ENCODE measurements at regions of chr9 and their contacts with region 1.

Region 1: GRCh38 chr9:72557549-72557948 is 36.1 kb downstream of the TMC1 start:
- DNase-seq: peak; percentile 97
- H3K4me3 ChIP-seq: no peak overlapping the region
- H3K27ac ChIP-seq: peak overlapping the region; percentile 58
- H3K4me1 ChIP-seq: peaks cover 26% of the 10 kb centered on the region
- H3K27me3 ChIP-seq: no peaks in the 10 kb centered on the region
- CTCF ChIP-seq: no peak

Region 2: DNA sequence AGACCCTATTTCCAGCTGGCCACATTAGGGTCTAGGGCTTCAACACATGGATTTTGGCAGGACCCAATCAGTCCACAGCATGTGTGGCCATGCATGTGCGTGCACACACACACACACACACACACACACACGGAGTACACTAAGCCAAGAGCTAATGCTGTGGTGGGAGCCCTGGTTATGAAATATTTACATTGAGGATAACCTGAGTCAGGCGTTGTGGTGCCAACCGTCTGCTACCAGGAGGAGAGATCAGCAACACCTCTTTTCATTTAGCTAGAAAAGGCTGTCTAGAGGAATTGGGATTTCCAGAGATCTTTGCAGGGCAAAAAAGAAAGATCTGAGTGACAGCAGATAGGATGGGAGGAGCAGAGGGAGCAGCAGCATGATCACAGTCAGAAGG is 1577.6 kb before region 1 on chr9:
- CTCF ChIA-PET with region 1: no interaction called
- dilution Hi-C with region 1: no loop called
- in situ Hi-C with region 1: no loop called
- intact Hi-C with region 1: no loop called
- DNase-seq: no peak
- H3K4me3 ChIP-seq: no peak overlapping the region
- H3K27ac ChIP-seq: no peak overlapping the region
- H3K4me1 ChIP-seq: no peaks in the 10 kb centered on the region
- H3K27me3 ChIP-seq: no peaks in the 10 kb centered on the region
- CTCF ChIP-seq: no peak

Region 3: GRCh38 chr9:72383978-72384709 is 173.4 kb before region 1 on chr9:
- CTCF ChIA-PET with region 1: no interaction called
- dilution Hi-C with region 1: loop called (anchors 10 kb)
- in situ Hi-C with region 1: no loop called
- intact Hi-C with region 1: no loop called
- DNase-seq: peak; percentile 87
- H3K4me3 ChIP-seq: no peak overlapping the region
- H3K27ac ChIP-seq: peak overlapping the region; percentile 17
- H3K4me1 ChIP-seq: peaks cover 7% of the 10 kb centered on the region
- H3K27me3 ChIP-seq: no peaks in the 10 kb centered on the region
- CTCF ChIP-seq: no peak

Region 4: GRCh38 chr9:72540348-72540873 is 17.1 kb before region 1 on chr9:
- CTCF ChIA-PET with region 1: interaction called, 3 read pairs
- dilution Hi-C with region 1: no loop called
- in situ Hi-C with region 1: no loop called
- intact Hi-C with region 1: loop called (anchors 1 kb)
- DNase-seq: peak; percentile 96
- H3K4me3 ChIP-seq: no peak overlapping the region
- H3K27ac ChIP-seq: peak overlapping the region; percentile 95
- H3K4me1 ChIP-seq: peaks cover 34% of the 10 kb centered on the region
- H3K27me3 ChIP-seq: no peaks in the 10 kb centered on the region
- CTCF ChIP-seq: no peak

Region 5: DNA sequence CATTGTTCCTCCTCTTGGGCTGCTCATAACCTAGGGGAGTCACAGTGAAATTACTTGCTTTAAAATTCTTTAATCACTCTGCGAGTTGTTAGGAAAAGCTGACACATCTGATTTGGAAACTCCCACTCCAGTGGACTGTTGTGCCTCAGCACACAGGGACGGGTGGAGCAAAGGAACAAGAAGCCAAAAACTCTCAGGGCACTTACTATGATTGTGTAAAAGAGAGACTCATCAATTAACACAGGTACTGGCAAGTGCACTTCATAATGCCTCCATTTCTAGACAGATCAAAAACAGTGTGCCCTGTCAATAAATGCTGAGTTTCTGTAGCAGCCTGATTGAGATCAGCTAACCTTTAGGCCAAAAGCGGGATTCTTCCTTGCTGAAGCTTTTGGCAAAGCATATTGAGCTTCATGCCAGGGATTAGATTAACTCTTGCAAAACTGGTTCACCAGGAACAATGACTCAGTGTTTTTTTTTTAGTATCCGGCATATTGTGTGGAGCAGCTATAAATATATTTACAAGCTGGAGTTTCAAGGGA is 19.7 kb after region 1 on chr9:
- CTCF ChIA-PET with region 1: no interaction called
- dilution Hi-C with region 1: no loop called
- in situ Hi-C with region 1: no loop called
- intact Hi-C with region 1: loop called (anchors 2 kb)
- DNase-seq: peak; percentile 93
- H3K4me3 ChIP-seq: peak overlapping the region in 1 of 3 experiments; percentile 6
- H3K27ac ChIP-seq: peak overlapping the region; percentile 66
- H3K4me1 ChIP-seq: peaks cover 52% of the 10 kb centered on the region
- H3K27me3 ChIP-seq: no peaks in the 10 kb centered on the region
- CTCF ChIP-seq: no peak

Measured in mammary epithelial cell (primary cell).